ENCODE measurements at regions of chr1 and their contacts with region 1.

Region 1: DNA sequence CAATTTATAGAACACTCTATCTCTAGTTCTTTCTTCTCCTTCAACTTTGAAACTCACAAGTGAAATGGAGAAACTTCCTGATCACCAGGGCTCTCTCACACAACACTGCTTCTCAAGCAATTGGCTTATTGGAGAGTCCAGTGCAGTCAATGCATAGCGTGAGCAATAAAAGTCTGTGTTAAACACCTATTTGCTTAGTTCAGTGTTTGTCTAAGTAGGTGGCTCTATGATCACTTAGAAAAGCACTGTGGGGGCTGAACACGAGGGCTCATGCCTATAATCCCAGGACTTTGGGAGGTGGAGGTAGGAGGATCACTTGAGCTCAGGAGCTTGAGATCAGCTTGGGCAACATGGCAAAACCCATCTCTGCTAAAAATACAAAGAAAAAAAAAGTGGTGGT is 12.2 kb downstream of the CTSS start:
- DNase-seq: no peak
- H3K4me3 ChIP-seq: no peak overlapping the region
- H3K4me3 Mint-ChIP-seq: no peak overlapping the region
- H3K27ac ChIP-seq: peak overlapping the region in 1 of 2 donors; percentile 65
- H3K27ac Mint-ChIP-seq: peak overlapping the region in 3 of 7 donors; percentile 50 to 83 (median 66)
- H3K4me1 ChIP-seq: peaks cover 6 to 21% of the 10 kb centered on the region in 2 donors
- H3K4me1 Mint-ChIP-seq: peaks cover 23% of the 10 kb centered on the region
- H3K27me3 ChIP-seq: no peaks in the 10 kb centered on the region
- H3K27me3 Mint-ChIP-seq: no peaks in the 10 kb centered on the region
- CTCF ChIP-seq: no peak

Region 2: DNA sequence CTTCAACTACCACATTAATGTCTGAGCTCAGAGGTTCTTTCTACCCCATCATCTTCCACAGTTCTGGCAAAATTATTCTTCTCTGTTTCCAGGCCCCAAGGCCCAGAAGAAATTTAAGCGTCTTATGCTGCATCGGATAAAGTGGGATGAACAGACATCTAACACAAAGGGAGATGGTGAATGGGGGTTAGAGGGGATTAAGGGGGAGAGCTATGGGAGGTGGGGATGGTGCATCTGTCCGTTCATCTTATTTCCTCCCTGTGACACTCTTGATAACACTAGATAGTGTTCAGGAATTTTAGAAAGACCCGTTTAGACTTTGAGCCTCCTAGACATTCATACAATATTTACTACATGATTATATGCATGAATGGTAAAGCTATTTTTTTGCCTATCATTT is 407.1 kb before region 1 on chr1:
- intact Hi-C with region 1: loop called in 1 of 2 experiments (anchors 10 kb)
- DNase-seq: no peak
- H3K4me3 ChIP-seq: no peak overlapping the region
- H3K4me3 Mint-ChIP-seq: no peak overlapping the region
- H3K27ac ChIP-seq: no peak overlapping the region
- H3K27ac Mint-ChIP-seq: peak overlapping the region in 1 of 7 donors; percentile 20
- H3K4me1 ChIP-seq: no peaks in the 10 kb centered on the region
- H3K4me1 Mint-ChIP-seq: no peaks in the 10 kb centered on the region
- H3K27me3 ChIP-seq: no peaks in the 10 kb centered on the region
- H3K27me3 Mint-ChIP-seq: peaks cover 0 to 1% (median 0%) of the 10 kb centered on the region in 3 donors
- CTCF ChIP-seq: no peak

Region 3: DNA sequence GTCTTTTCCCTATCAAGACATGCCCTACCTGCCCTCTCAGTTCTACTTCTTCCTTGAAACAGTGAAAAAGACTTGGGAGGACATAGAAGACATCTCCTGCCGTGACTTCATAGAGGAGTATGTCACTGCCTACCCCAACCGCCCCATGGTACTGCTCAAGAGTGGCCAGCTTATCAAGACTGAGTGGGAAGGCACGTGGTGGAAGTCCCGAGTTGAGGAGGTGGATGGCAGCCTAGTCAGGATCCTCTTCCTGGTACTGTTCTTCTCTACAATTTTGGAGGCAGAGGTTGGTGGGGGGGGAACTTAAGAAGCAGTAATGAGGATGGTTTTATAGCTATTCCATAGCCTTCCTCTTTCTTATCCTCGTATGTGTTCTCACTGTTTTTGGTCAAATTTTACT is 191.4 kb after region 1 on chr1:
- intact Hi-C with region 1: loop called in 1 of 2 experiments (anchors 10 kb)
- DNase-seq: no peak
- H3K4me3 ChIP-seq: no peak overlapping the region
- H3K4me3 Mint-ChIP-seq: no peak overlapping the region
- H3K27ac ChIP-seq: no peak overlapping the region
- H3K27ac Mint-ChIP-seq: peak overlapping the region in 1 of 7 donors; percentile 21
- H3K4me1 ChIP-seq: no peaks in the 10 kb centered on the region
- H3K4me1 Mint-ChIP-seq: no peaks in the 10 kb centered on the region
- H3K27me3 ChIP-seq: no peaks in the 10 kb centered on the region
- H3K27me3 Mint-ChIP-seq: no peaks in the 10 kb centered on the region
- CTCF ChIP-seq: no peak